ENCODE measurements at regions of chr4 and their contacts with region 1.

Region 1: GRCh38 chr4:38804654-38805295 is at the start of gene TLR1:
- DNase-seq: peak; percentile 70
- H3K4me3 Mint-ChIP-seq: peak within 1 kb of the TSS; percentile 70
- H3K27ac Mint-ChIP-seq: peak within 1 kb of the TSS; percentile 97
- H3K4me1 Mint-ChIP-seq: peaks cover 25% of the 10 kb centered on the region
- H3K27me3 Mint-ChIP-seq: no peaks in the 10 kb centered on the region
- CTCF ChIP-seq: peak; percentile 40
- total RNA-seq, gene TLR1: 1.9 and 2.2 TPM in 2 replicates

Region 2: DNA sequence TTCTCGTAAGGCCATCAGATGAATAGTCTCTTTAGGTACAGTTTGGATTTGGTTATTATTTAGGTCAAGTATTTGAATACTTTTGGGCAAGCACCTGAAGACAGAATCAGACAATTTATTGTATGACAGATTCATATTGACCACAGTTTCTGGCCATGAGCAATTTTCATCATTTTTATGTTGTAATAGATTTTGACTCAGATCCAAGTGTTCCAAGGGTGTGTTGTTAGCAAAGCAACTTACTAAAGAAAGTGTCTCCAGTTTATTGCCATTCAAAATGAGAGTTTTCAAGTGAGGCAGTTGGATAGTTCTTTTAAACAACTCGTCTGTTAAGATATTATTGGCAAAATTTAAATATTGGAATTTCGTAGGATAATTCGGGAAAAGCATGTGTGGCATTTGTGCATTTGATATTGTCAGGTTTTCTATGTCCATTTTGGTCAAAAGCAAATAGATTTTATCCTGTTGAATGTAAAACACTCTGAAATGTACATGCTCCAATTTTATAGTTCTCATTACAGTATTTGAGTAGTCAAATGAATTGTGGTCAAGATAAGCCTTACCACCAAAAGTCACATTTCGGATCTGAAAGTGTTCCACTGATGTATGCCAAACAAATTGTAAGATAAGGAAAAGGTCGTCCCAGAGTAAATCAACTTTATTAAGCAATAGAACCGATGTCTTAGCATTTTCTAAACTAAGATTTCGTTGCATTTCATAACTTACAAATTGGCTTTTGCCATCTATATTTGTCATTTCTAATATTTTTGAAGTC is 30.4 kb before region 1 on chr4:
- CTCF ChIA-PET with region 1: interaction called, 14 read pairs
- POLR2A ChIA-PET with region 1: interaction called, 3 read pairs
- intact Hi-C with region 1: no loop called
- DNase-seq: peak; percentile 64
- H3K4me3 Mint-ChIP-seq: no peak overlapping the region
- H3K27ac Mint-ChIP-seq: peak overlapping the region; percentile 7
- H3K4me1 Mint-ChIP-seq: peaks cover 17% of the 10 kb centered on the region
- H3K27me3 Mint-ChIP-seq: no peaks in the 10 kb centered on the region
- CTCF ChIP-seq: no peak

Measured in MCF 10A (cell line).